Left ventricle myocardium superior (tissue), 1 donor: ENCODE measurements at regions of chr10 and their contacts with region 1.

Region 1: DNA sequence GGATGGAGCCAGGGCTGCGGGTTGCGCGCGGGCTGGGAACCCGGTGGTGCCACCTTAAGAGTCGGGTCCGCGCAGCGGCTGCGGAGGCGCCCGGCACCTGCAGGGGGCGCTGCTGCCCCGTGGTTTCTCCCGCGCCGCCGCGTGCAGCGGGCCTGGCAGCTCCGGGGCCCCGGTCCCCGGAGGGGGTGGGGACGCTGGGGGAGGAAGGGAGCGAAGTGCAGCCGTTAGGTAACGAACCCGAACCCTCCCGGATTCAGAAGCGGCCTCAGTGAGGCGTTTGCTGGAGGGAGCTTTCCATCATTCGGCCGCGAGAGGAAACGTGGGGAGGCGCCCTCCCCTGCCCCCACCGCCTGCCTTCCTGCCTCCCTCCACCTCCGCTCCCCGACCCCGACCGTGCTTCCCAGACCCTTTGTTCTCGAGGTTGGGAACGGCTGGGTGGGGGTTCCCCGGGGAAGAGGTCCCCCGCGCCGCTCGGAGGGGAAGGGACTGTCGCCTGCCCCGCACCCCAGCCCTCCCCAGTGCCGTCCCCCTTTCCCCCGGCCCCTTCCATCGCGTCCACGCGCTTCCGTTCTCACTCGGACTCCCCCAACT is 29.6 kb downstream of the SKIDA1 start:
- DNase-seq: peak; percentile 92
- ATAC-seq: peak; percentile 89

Region 2: DNA sequence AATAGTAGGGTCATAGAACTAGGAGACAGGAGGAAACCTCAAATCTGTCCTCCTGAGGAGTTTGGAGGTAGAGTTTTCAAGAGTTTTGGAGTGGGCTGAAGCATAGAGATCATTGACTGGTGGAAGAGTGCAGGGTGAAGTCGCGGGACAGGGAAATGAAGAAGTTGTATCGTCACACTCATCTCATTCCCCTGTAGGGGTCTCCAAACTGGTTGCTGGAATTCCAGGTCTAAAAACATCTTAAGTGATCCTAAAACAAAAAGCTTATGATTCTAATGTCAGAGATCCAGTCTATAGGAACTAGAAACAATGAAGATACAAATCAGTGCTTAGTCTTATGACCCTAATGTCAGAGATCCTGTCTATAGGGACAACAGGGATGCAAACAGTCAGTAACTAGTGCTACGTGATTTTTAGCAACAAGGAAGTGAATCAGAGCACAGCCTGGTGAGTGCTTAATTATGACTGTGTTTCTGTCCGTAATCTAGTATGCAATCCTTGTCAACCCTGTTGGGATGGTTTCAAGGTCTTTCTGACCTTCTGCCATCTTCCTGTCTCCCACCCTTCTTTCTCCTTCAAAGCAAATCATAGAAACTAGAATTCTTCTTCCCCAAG is 109.7 kb before region 1 on chr10:
- intact Hi-C with region 1: no loop called
- DNase-seq: no peak
- ATAC-seq: no peak

Region 3: GRCh38 chr10:21732067-21732772 is 236.4 kb after region 1 on chr10:
- intact Hi-C with region 1: loop called (anchors 5 kb)
- DNase-seq: peak; percentile 70
- ATAC-seq: peak; percentile 95

Region 4: DNA sequence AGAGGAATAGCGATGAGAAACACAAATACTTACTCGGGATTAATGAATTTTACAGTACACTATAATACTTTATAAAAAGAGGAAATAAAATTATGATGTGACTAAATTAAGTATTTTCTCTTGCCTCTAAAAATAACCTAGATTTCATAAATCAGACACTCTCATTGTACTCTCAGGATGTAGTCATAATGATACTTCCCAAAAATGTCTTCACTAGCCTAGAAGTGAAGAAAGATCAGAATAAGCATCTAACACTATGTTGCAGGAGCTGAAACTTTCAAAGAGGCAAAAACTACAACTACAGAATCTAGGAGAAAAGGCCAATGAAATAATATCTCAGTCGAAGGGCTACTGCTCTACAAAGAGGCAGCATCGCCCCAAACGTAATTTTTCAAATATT is 458.3 kb after region 1 on chr10:
- intact Hi-C with region 1: no loop called
- DNase-seq: no peak
- ATAC-seq: no peak

Region 5: DNA sequence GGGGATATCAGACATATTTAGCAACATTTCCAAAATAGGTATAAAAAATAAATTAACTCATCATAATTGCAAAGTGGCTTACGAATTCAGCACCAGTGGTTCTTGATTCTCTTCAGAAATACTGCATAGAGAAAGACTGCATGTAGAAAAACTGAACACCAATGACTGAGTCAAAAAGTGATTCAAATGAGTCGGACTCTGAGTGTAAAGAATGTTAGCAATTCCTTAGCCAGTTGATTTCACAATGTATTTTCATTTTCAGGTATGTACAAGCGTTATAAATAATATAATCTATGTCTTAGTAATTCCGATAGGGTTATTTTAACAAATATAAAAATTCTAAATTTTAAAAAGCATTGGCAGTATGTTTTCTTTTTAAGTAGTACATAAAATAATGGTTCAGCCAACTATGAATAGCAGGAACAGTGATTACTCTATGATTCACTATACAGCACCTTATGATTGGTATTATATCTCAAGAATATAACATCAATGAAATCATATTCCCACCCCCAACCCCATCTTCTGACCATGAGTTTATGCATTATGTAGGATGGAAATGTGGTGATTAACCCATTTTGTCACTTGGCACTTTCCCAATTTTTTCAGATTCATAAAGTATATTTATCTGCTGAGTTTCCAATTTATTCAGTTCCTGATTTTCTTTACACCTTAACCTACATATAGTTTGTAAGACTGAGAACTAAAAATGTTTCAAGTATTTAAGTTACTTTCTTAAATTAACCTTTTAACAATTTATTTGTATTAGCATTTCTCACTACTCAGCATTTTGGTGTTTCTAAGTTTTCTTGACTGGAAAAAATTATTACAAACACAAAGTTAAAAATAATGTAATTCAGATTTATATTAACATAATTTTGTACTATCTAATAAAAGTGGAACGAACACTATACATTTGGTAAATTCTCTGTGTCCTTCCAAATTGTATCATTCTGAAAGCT is 473.8 kb after region 1 on chr10:
- intact Hi-C with region 1: loop called (anchors 10 kb)
- DNase-seq: no peak
- ATAC-seq: no peak